CD4-positive, alpha-beta memory T cell (primary cell): ENCODE measurements at regions of chr16 and their contacts with region 1.

Region 1: DNA sequence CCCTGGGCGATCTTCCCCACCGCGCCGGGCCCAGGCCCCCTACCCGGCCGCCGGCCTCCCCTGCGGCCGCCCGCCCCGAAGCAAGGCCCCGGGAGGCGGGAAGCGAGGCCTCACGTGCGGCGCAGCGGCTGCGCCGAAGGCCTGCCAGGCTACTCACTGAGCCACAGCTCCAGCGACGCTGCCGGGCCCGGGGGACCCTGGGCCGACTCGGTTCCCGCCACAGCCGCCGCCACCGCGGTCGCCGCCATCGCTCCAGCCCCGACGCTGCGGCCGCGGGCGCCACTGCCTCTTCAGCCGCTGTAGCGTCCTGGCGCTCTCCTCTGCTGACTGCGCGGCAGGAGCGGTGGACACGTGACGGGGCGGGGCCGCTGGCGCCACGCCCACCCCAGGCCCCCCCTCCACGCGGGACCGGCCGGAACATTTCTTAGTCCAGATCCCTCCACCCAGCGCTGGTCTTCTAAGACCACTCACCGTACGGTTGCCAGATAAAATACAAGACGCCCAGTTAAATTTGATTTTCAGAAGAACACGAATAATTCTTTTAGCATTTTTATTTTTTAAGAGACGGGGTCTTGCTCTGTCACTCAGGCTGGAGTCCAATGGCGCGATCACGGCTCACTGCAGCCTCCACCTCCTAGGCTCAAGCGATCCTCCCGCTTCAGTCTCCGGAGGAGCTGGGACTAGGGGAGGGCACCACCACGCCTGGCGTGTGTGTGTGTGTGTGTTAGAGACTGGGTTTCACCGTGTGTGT is at the start of gene GGA2:
- DNase-seq: peak; percentile 68 to 78 (median 73)
- H3K4me3 ChIP-seq: peak within 1 kb of the TSS; percentile 63 to 75
- H3K4me3 Mint-ChIP-seq: peak within 1 kb of the TSS; percentile 90 to 97 (median 94)
- H3K27ac ChIP-seq: peak within 1 kb of the TSS; percentile 61
- H3K27ac Mint-ChIP-seq: peak within 1 kb of the TSS; percentile 71 to 95 (median 90)
- H3K4me1 ChIP-seq: peaks cover 51% of the 10 kb centered on the region
- H3K4me1 Mint-ChIP-seq: peaks cover 44 to 78% (median 59%) of the 10 kb centered on the region in 4 donors
- H3K27me3 ChIP-seq: no peaks in the 10 kb centered on the region
- H3K27me3 Mint-ChIP-seq: no peaks in the 10 kb centered on the region
- total RNA-seq, gene GGA2: 114 to 118 TPM

Region 2: GRCh38 chr16:23452572-23453337 is 57.6 kb before region 1 on chr16 and contains the start of gene COG7:
- CTCF ChIA-PET with region 1: no interaction called
- POLR2A ChIA-PET with region 1: interaction called, 6 read pairs
- intact Hi-C with region 1: loop called (anchors 1 kb)
- DNase-seq: peak; percentile 82 to 88 (median 83)
- H3K4me3 ChIP-seq: peak within 1 kb of the TSS; percentile 83 to 95
- H3K4me3 Mint-ChIP-seq: peak within 1 kb of the TSS; percentile 92 to 99 (median 98)
- H3K27ac ChIP-seq: peak within 1 kb of the TSS; percentile 64
- H3K27ac Mint-ChIP-seq: peak within 1 kb of the TSS; percentile 90 to 98 (median 95)
- H3K4me1 ChIP-seq: peaks cover 21% of the 10 kb centered on the region
- H3K4me1 Mint-ChIP-seq: peaks cover 24 to 53% (median 36%) of the 10 kb centered on the region in 4 donors
- H3K27me3 ChIP-seq: no peaks in the 10 kb centered on the region
- H3K27me3 Mint-ChIP-seq: no peaks in the 10 kb centered on the region
- total RNA-seq, gene COG7: 19.7 to 24.7 TPM

Region 3: DNA sequence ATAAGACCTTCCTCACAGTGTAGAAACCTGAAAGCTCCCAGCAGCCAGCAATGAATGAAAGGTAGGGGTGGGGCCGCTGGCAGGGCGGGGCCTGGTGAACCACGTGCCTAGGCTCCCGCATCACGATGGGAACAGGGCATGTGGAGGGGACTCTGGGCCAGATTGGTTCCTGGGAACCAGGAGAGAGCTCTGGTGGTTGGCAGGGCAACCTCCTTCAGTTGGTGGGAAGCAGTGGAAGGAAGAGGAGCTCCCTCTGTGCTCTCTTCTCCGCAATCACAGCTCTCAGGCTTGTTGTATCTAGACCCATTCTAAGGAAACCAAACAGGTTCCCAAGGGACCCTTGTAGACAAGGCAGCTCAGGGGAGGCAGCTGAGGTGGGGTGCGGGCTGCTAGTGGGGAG is 10.5 kb before region 1 on chr16:
- CTCF ChIA-PET with region 1: interaction called, 5 read pairs
- POLR2A ChIA-PET with region 1: interaction called, 10 read pairs
- intact Hi-C with region 1: no loop called
- DNase-seq: no peak
- H3K4me3 ChIP-seq: no peak overlapping the region
- H3K4me3 Mint-ChIP-seq: no peak overlapping the region
- H3K27ac ChIP-seq: no peak overlapping the region
- H3K27ac Mint-ChIP-seq: peak overlapping the region in 1 of 7 donors; percentile 55
- H3K4me1 ChIP-seq: peaks cover 62% of the 10 kb centered on the region
- H3K4me1 Mint-ChIP-seq: peaks cover 28 to 77% (median 53%) of the 10 kb centered on the region in 4 donors
- H3K27me3 ChIP-seq: no peaks in the 10 kb centered on the region
- H3K27me3 Mint-ChIP-seq: no peaks in the 10 kb centered on the region